ENCODE measurements at regions of chr10 and their contacts with region 1.

Region 1: GRCh38 chr10:95601116-95601719 is 40.0 kb upstream of the SORBS1 start:
- DNase-seq: peak; percentile 56 to 62
- H3K4me3 ChIP-seq: no peak overlapping the region
- H3K27ac ChIP-seq: no peak overlapping the region
- H3K4me1 ChIP-seq: no peaks in the 10 kb centered on the region
- H3K27me3 ChIP-seq: no peaks in the 10 kb centered on the region
- CTCF ChIP-seq: peak; percentile 83

Region 2: DNA sequence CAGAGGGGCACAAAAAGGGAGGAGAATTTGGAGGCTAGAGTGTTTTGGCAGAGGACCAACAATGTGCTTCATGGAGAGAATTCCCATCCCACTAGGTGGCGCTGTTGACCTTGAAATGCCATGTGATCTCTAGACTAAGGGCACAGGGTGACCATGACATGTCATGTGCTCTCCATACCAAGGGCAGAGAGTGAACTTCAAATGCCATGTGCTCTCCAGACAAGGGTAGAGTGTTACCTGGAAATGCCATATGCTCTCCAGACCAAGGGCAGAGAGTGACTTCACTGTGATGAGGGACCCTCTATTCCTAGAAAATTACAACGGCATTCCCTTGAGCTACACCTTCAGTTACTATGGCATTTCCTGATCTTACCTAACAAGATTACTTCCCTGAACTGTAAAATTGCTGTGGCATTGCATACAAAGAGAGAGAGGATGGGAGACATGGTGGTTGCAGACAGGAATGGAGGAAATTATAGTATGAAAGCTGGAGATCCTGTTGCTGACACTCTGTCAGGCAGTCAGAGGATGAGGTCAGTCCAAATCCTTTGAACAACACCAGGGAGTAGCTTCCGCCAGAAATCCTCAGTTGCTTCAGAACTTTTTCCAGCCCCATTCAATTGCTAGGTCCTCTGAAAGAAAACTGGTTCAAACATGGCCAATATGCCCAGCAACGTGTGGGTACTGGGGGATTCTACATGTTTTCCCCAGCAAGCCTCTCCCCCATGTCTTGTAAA is 468.0 kb before region 1 on chr10:
- CTCF ChIA-PET with region 1: no interaction called
- POLR2A ChIA-PET with region 1: no interaction called
- intact Hi-C with region 1: loop called (anchors 2 kb)
- DNase-seq: peak; percentile 54 to 56
- H3K4me3 ChIP-seq: no peak overlapping the region
- H3K27ac ChIP-seq: no peak overlapping the region
- H3K4me1 ChIP-seq: no peaks in the 10 kb centered on the region
- H3K27me3 ChIP-seq: no peaks in the 10 kb centered on the region
- CTCF ChIP-seq: peak; percentile 82

Region 3: DNA sequence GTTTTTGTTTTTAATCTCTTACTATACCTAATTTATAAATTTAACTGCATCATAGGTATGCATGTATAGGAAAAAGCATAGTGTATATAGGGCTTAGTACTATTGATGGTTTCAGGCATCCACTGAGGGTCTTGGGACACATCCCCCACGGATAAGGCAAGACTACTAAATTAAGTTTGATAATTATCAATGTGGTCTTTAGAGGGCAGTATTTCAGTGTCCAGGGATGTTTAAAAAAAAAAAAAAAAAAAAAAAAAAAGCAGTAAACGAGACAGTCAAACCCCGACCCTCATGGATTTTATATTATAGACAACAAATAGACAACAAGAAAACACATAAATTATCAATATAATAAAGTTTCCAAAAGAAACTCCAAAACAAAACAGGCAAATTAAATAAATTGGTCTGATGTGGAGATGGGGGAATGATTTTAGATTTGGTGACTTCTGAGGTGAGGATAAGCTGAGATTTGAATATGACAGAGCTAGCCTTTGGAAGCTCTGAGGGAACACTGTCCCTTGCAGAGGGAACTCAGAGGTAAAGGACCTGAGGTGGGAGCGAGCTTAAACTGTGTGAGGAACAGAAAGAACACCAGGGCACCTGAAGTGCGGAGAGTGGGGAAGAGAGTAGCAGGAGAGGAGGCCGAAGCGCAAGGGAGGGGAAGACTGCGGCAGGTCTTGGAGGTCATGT is 392.4 kb before region 1 on chr10:
- CTCF ChIA-PET with region 1: no interaction called
- POLR2A ChIA-PET with region 1: no interaction called
- intact Hi-C with region 1: loop called (anchors 10 kb)
- DNase-seq: no peak
- H3K4me3 ChIP-seq: no peak overlapping the region
- H3K27ac ChIP-seq: no peak overlapping the region
- H3K4me1 ChIP-seq: peaks cover 11% of the 10 kb centered on the region
- H3K27me3 ChIP-seq: no peaks in the 10 kb centered on the region
- CTCF ChIP-seq: peak; percentile 59; the same call in 1 of the 2 replicates

Region 4: GRCh38 chr10:95430231-95430951 is 170.8 kb before region 1 on chr10:
- CTCF ChIA-PET with region 1: interaction called, 5 read pairs
- POLR2A ChIA-PET with region 1: no interaction called
- intact Hi-C with region 1: loop called (anchors 1 kb)
- DNase-seq: peak; percentile 29 to 48
- H3K4me3 ChIP-seq: no peak overlapping the region
- H3K27ac ChIP-seq: peak overlapping the region; percentile 64
- H3K4me1 ChIP-seq: peaks cover 16% of the 10 kb centered on the region
- H3K27me3 ChIP-seq: no peaks in the 10 kb centered on the region
- CTCF ChIP-seq: peak; percentile 83

Region 5: DNA sequence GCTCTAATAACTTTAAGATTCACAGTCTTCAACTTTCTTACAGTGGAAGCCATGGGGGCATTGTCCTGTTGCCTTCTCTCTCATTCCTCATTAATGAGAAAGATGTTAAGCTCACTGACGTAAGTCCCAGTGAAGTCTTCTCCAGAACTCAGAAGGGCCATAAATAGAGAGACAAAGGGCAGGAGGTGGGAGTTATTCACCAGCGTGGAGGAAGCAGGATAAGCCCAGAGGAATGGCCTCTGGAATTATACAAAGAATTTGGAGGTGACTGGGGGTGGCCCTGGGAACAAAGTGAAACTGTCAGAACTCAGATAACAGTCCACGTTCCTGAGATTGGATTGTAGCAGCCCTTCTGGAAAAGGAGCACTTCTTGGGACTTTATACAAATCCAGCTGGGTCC is 92.5 kb before region 1 on chr10:
- CTCF ChIA-PET with region 1: no interaction called
- POLR2A ChIA-PET with region 1: no interaction called
- intact Hi-C with region 1: no loop called
- DNase-seq: no peak
- H3K4me3 ChIP-seq: no peak overlapping the region
- H3K27ac ChIP-seq: no peak overlapping the region
- H3K4me1 ChIP-seq: no peaks in the 10 kb centered on the region
- H3K27me3 ChIP-seq: no peaks in the 10 kb centered on the region
- CTCF ChIP-seq: no peak